GM23248 (cell line): ENCODE measurements at regions of chr17 and their contacts with region 1.

Region 1: DNA sequence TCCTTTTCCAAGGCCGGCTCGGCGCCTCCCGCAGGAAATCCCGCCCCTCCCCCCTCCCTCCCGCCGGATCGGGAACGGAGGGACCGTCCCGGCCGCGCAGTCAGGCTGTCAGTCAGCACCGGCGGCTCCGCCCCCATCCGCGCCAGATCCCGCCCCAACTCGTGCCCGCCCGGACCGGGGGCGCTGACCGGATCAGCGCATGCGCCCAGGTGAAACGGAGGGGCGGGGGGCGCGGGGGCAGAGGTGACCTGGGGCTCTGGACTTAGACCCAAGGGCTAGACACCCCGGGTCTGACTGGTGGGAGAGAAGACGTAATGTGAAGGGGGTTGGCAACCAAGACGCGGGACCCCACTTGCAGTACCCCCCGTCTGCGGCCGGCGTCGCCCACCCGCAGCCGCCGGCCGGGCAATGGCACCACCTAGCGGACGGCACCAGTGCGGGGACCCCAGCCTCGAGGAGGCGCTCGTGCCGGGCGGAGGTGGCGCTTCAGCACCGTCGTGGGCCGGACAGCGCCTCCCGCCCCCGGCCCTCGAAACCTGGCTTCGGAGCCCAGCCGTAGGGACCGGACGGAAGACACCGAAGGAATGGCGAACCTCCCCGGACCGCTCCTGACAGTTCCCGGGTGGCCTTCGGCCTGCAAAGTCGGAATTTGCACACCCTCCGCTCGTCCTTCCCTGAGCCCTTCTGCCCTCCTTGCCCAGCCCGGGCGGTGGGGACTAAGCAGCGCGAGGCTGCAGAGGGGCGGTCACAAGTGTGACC is at the start of gene CASKIN2:
- DNase-seq: peak; percentile 91
- H3K4me3 ChIP-seq: peak within 1 kb of the TSS; percentile 76
- H3K27ac ChIP-seq: no peak within 1 kb of the TSS
- H3K4me1 ChIP-seq: no peaks in the 10 kb centered on the region
- H3K27me3 ChIP-seq: no peaks in the 10 kb centered on the region
- total RNA-seq, gene CASKIN2: 6.2 and 9.2 TPM in 2 replicates

Region 2: GRCh38 chr17:75105618-75106384 is 409.9 kb before region 1 on chr17:
- in situ Hi-C with region 1: no loop called
- DNase-seq: peak; percentile 63
- H3K4me3 ChIP-seq: no peak overlapping the region
- H3K27ac ChIP-seq: no peak overlapping the region
- H3K4me1 ChIP-seq: no peaks in the 10 kb centered on the region
- H3K27me3 ChIP-seq: no peaks in the 10 kb centered on the region

Region 3: GRCh38 chr17:75430159-75430974 is 85.3 kb before region 1 on chr17:
- in situ Hi-C with region 1: loop called (anchors 10 kb)
- DNase-seq: no peak
- H3K4me3 ChIP-seq: no peak overlapping the region
- H3K27ac ChIP-seq: no peak overlapping the region
- H3K4me1 ChIP-seq: peaks cover 11% of the 10 kb centered on the region
- H3K27me3 ChIP-seq: no peaks in the 10 kb centered on the region